ENCODE measurements at regions of chr7 and their contacts with region 1.

Region 1: GRCh38 chr7:8217200-8218068 is 44.5 kb downstream of the ICA1 start:
- DNase-seq: peak in 4 of 5 donors; percentile 65 to 69 (median 67)
- H3K4me3 ChIP-seq: no peak overlapping the region
- H3K4me3 Mint-ChIP-seq: no peak overlapping the region
- H3K27ac ChIP-seq: no peak overlapping the region
- H3K27ac Mint-ChIP-seq: peak overlapping the region in 2 of 7 donors; percentile 26 to 47
- H3K4me1 ChIP-seq: no peaks in the 10 kb centered on the region
- H3K4me1 Mint-ChIP-seq: peaks cover 0 to 4% (median 2%) of the 10 kb centered on the region in 4 donors
- H3K27me3 ChIP-seq: no peaks in the 10 kb centered on the region
- H3K27me3 Mint-ChIP-seq: no peaks in the 10 kb centered on the region

Region 2: GRCh38 chr7:7424151-7424873 is 793.1 kb before region 1 on chr7:
- CTCF ChIA-PET with region 1: interaction called, 7 read pairs
- POLR2A ChIA-PET with region 1: no interaction called
- intact Hi-C with region 1: loop called (anchors 2 kb)
- DNase-seq: peak in 4 of 5 donors; percentile 6 to 32 (median 29)
- H3K4me3 ChIP-seq: peak overlapping the region; percentile 33 to 41
- H3K4me3 Mint-ChIP-seq: peak overlapping the region in 7 of 8 donors; percentile 81 to 89 (median 85)
- H3K27ac ChIP-seq: no peak overlapping the region
- H3K27ac Mint-ChIP-seq: peak overlapping the region in 4 of 7 donors; percentile 17 to 71 (median 53)
- H3K4me1 ChIP-seq: no peaks in the 10 kb centered on the region
- H3K4me1 Mint-ChIP-seq: peaks cover 0 to 10% (median 6%) of the 10 kb centered on the region in 4 donors
- H3K27me3 ChIP-seq: no peaks in the 10 kb centered on the region
- H3K27me3 Mint-ChIP-seq: peaks cover 0 to 1% of the 10 kb centered on the region in 2 donors

Region 3: GRCh38 chr7:7542251-7542835 is 675.1 kb before region 1 on chr7:
- CTCF ChIA-PET with region 1: no interaction called
- POLR2A ChIA-PET with region 1: no interaction called
- intact Hi-C with region 1: loop called (anchors 2 kb)
- DNase-seq: no peak
- H3K4me3 ChIP-seq: no peak overlapping the region
- H3K4me3 Mint-ChIP-seq: no peak overlapping the region
- H3K27ac ChIP-seq: no peak overlapping the region
- H3K27ac Mint-ChIP-seq: no peak overlapping the region
- H3K4me1 ChIP-seq: no peaks in the 10 kb centered on the region
- H3K4me1 Mint-ChIP-seq: peaks cover 0 to 3% (median under 1%) of the 10 kb centered on the region in 4 donors
- H3K27me3 ChIP-seq: no peaks in the 10 kb centered on the region
- H3K27me3 Mint-ChIP-seq: peaks cover 0 to 1% of the 10 kb centered on the region in 2 donors

Region 4: GRCh38 chr7:7595451-7595850 is 622.0 kb before region 1 on chr7:
- CTCF ChIA-PET with region 1: interaction called, 65 read pairs
- POLR2A ChIA-PET with region 1: no interaction called
- intact Hi-C with region 1: loop called (anchors 1 kb)
- DNase-seq: peak in 4 of 5 donors; percentile 30 to 36 (median 34)
- H3K4me3 ChIP-seq: no peak overlapping the region
- H3K4me3 Mint-ChIP-seq: no peak overlapping the region
- H3K27ac ChIP-seq: no peak overlapping the region
- H3K27ac Mint-ChIP-seq: no peak overlapping the region
- H3K4me1 ChIP-seq: no peaks in the 10 kb centered on the region
- H3K4me1 Mint-ChIP-seq: no peaks in the 10 kb centered on the region
- H3K27me3 ChIP-seq: no peaks in the 10 kb centered on the region
- H3K27me3 Mint-ChIP-seq: no peaks in the 10 kb centered on the region

Region 5: GRCh38 chr7:7681179-7681935 is 536.1 kb before region 1 on chr7:
- CTCF ChIA-PET with region 1: interaction called, 56 read pairs
- POLR2A ChIA-PET with region 1: no interaction called
- intact Hi-C with region 1: loop called (anchors 1 kb)
- DNase-seq: peak; percentile 47 to 62 (median 54)
- H3K4me3 ChIP-seq: no peak overlapping the region
- H3K4me3 Mint-ChIP-seq: peak overlapping the region in 3 of 8 donors; percentile 21 to 51 (median 35)
- H3K27ac ChIP-seq: no peak overlapping the region
- H3K27ac Mint-ChIP-seq: peak overlapping the region in 5 of 7 donors; percentile 41 to 59 (median 45)
- H3K4me1 ChIP-seq: peaks cover 15% of the 10 kb centered on the region
- H3K4me1 Mint-ChIP-seq: peaks cover 18 to 35% (median 24%) of the 10 kb centered on the region in 4 donors
- H3K27me3 ChIP-seq: no peaks in the 10 kb centered on the region
- H3K27me3 Mint-ChIP-seq: no peaks in the 10 kb centered on the region

Region 6: GRCh38 chr7:7761340-7761980 is 456.0 kb before region 1 on chr7:
- CTCF ChIA-PET with region 1: interaction called, 14 read pairs
- POLR2A ChIA-PET with region 1: no interaction called
- intact Hi-C with region 1: loop called (anchors 1 kb)
- DNase-seq: peak in 4 of 5 donors; percentile 46 to 56 (median 49)
- H3K4me3 ChIP-seq: peak overlapping the region; percentile 4 to 75
- H3K4me3 Mint-ChIP-seq: peak overlapping the region; percentile 81 to 98 (median 92)
- H3K27ac ChIP-seq: peak overlapping the region; percentile 67
- H3K27ac Mint-ChIP-seq: peak overlapping the region; percentile 89 to 98 (median 95)
- H3K4me1 ChIP-seq: peaks cover 35% of the 10 kb centered on the region
- H3K4me1 Mint-ChIP-seq: peaks cover 35 to 40% (median 39%) of the 10 kb centered on the region in 4 donors
- H3K27me3 ChIP-seq: no peaks in the 10 kb centered on the region
- H3K27me3 Mint-ChIP-seq: no peaks in the 10 kb centered on the region

Region 7: DNA sequence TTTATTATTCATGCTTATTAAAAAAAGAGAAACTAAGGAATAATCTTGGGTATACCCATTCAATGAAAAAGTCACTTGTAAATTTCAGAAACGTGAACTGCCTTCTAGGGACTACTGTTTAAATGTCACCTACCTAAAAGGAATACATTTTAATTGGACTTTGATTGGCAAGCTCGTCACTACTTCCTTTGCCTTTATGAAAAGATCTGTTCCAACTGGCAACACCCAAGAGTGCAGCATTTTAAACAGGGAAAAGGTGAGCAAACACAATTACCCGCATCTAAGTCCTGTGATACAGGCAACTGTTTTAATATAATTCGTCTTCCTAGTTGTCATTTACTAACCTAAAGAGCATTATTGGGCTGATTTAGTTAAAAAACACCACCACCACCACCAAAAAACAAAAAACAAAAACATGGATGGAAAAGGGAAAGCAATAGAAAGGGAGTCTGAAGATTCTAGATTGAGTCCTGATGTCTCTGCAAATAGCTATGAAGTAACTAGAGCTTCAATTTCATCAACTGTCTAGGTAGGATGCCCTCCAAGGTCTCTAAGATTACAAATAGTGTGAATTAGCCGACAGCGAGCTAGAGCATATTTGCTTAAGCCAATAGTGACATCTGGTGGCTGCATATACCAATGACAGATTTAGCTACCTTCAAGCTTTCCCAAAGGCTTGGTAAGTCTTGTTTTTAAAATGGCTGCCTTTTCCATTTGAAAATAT is 78.4 kb after region 1 on chr7:
- CTCF ChIA-PET with region 1: interaction called, 3 read pairs
- POLR2A ChIA-PET with region 1: no interaction called
- intact Hi-C with region 1: loop called (anchors 5 kb)
- DNase-seq: peak; percentile 44 to 54 (median 52)
- H3K4me3 ChIP-seq: no peak overlapping the region
- H3K4me3 Mint-ChIP-seq: no peak overlapping the region
- H3K27ac ChIP-seq: no peak overlapping the region
- H3K27ac Mint-ChIP-seq: no peak overlapping the region
- H3K4me1 ChIP-seq: no peaks in the 10 kb centered on the region
- H3K4me1 Mint-ChIP-seq: peaks cover 0 to 1% (median 0%) of the 10 kb centered on the region in 4 donors
- H3K27me3 ChIP-seq: no peaks in the 10 kb centered on the region
- H3K27me3 Mint-ChIP-seq: peaks cover 8 to 12% of the 10 kb centered on the region in 2 donors

Region 8: GRCh38 chr7:10181996-10182395 is 1964.6 kb after region 1 on chr7:
- CTCF ChIA-PET with region 1: no interaction called
- POLR2A ChIA-PET with region 1: no interaction called
- intact Hi-C with region 1: no loop called
- DNase-seq: no peak
- H3K4me3 ChIP-seq: no peak overlapping the region
- H3K4me3 Mint-ChIP-seq: no peak overlapping the region
- H3K27ac ChIP-seq: no peak overlapping the region
- H3K27ac Mint-ChIP-seq: no peak overlapping the region
- H3K4me1 ChIP-seq: no peaks in the 10 kb centered on the region
- H3K4me1 Mint-ChIP-seq: no peaks in the 10 kb centered on the region
- H3K27me3 ChIP-seq: no peaks in the 10 kb centered on the region
- H3K27me3 Mint-ChIP-seq: no peaks in the 10 kb centered on the region

Measured in CD4-positive, alpha-beta memory T cell (primary cell).